B cell (primary cell): ENCODE measurements at regions of chr1 and their contacts with region 1.

Region 1: GRCh38 chr1:1574721-1575537 is at the start of gene SSU72:
- DNase-seq: peak; percentile 97
- ATAC-seq: peak; percentile 85
- H3K4me3 ChIP-seq: peak within 1 kb of the TSS; percentile 83 to 99 (median 92)
- H3K4me3 Mint-ChIP-seq: peak within 1 kb of the TSS; percentile 96
- H3K27ac ChIP-seq: peak within 1 kb of the TSS; percentile 99
- H3K27ac Mint-ChIP-seq: peak within 1 kb of the TSS; percentile 99
- H3K4me1 ChIP-seq: peaks cover 11 to 27% of the 10 kb centered on the region in 2 donors
- H3K4me1 Mint-ChIP-seq: peaks cover 30% of the 10 kb centered on the region
- H3K27me3 ChIP-seq: peaks cover 0 to 4% (median 1%) of the 10 kb centered on the region in 4 experiments
- H3K27me3 Mint-ChIP-seq: no peaks in the 10 kb centered on the region
- CTCF ChIP-seq: no peak
- total RNA-seq, gene SSU72: 111 and 112 TPM in 2 replicates

Region 2: GRCh38 chr1:1511533-1512285 is 63.2 kb before region 1 on chr1 and contains the start of gene ATAD3A:
- CTCF ChIA-PET with region 1: no interaction called
- POLR2A ChIA-PET with region 1: no interaction called
- intact Hi-C with region 1: loop called (anchors 2 kb)
- DNase-seq: peak; percentile 97
- ATAC-seq: peak; percentile 94
- H3K4me3 ChIP-seq: peak within 1 kb of the TSS; percentile 47 to 92 (median 87)
- H3K4me3 Mint-ChIP-seq: peak within 1 kb of the TSS; percentile 95
- H3K27ac ChIP-seq: peak within 1 kb of the TSS; percentile 90 to 94
- H3K27ac Mint-ChIP-seq: peak within 1 kb of the TSS; percentile 94
- H3K4me1 ChIP-seq: peaks cover 6 to 10% of the 10 kb centered on the region in 2 donors
- H3K4me1 Mint-ChIP-seq: peaks cover 13% of the 10 kb centered on the region
- H3K27me3 ChIP-seq: no peaks in the 10 kb centered on the region
- H3K27me3 Mint-ChIP-seq: no peaks in the 10 kb centered on the region
- CTCF ChIP-seq: no peak
- total RNA-seq, gene ATAD3A: 17.5 and 22.9 TPM in 2 replicates

Region 3: DNA sequence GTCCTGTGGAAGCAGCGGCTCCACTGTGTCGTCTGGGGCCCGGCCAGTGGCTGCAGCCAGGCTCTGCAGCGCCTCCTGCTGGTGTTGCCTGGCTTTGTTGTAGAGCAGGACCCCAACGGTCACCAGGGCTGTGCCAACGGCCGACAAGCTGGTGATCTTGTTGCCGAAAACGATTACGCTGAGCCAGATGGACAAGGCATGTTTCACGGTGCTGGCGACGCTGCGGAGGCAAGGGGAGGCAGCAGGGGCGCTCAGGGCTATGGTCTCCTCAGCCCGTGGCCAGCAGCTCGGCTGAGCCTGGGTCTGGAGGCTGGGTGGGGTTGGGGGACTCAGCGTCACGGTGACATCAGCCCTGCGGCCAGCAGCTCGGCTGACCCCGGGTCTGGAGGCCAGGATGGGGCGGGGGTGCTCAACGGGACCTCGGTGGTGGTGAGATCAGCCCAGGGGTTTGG is 90.9 kb after region 1 on chr1:
- CTCF ChIA-PET with region 1: no interaction called
- POLR2A ChIA-PET with region 1: no interaction called
- intact Hi-C with region 1: no loop called
- DNase-seq: peak; percentile 31
- ATAC-seq: no peak
- H3K4me3 ChIP-seq: no peak overlapping the region
- H3K4me3 Mint-ChIP-seq: no peak overlapping the region
- H3K27ac ChIP-seq: no peak overlapping the region
- H3K27ac Mint-ChIP-seq: no peak overlapping the region
- H3K4me1 ChIP-seq: peaks cover 0 to 8% of the 10 kb centered on the region in 2 donors
- H3K4me1 Mint-ChIP-seq: peaks cover 2% of the 10 kb centered on the region
- H3K27me3 ChIP-seq: no peaks in the 10 kb centered on the region
- H3K27me3 Mint-ChIP-seq: no peaks in the 10 kb centered on the region
- CTCF ChIP-seq: peak; percentile 36

Region 4: GRCh38 chr1:1678581-1679390 is 103.9 kb after region 1 on chr1:
- CTCF ChIA-PET with region 1: no interaction called
- POLR2A ChIA-PET with region 1: no interaction called
- intact Hi-C with region 1: loop called (anchors 5 kb)
- DNase-seq: peak; percentile 67
- ATAC-seq: peak; percentile 22
- H3K4me3 ChIP-seq: peak overlapping the region in 1 of 5 experiments; percentile 56
- H3K4me3 Mint-ChIP-seq: peak overlapping the region; percentile 86
- H3K27ac ChIP-seq: peak overlapping the region; percentile 74 to 76
- H3K27ac Mint-ChIP-seq: peak overlapping the region; percentile 98
- H3K4me1 ChIP-seq: peaks cover 9 to 22% of the 10 kb centered on the region in 2 donors
- H3K4me1 Mint-ChIP-seq: peaks cover 29% of the 10 kb centered on the region
- H3K27me3 ChIP-seq: no peaks in the 10 kb centered on the region
- H3K27me3 Mint-ChIP-seq: no peaks in the 10 kb centered on the region
- CTCF ChIP-seq: peak; percentile 59